Endothelial cell of umbilical vein (primary cell): ENCODE measurements at regions of chr1 and their contacts with region 1.

Region 1: GRCh38 chr1:209850342-209850979 is 22.7 kb downstream of the UTP25 start:
- DNase-seq: peak; percentile 59
- H3K4me3 ChIP-seq: no peak overlapping the region
- H3K27ac ChIP-seq: no peak overlapping the region
- H3K4me1 ChIP-seq: no peaks in the 10 kb centered on the region
- H3K27me3 ChIP-seq: no peaks in the 10 kb centered on the region
- CTCF ChIP-seq: peak; percentile 70 to 76
- POLR2A ChIP-seq: no peak

Region 2: DNA sequence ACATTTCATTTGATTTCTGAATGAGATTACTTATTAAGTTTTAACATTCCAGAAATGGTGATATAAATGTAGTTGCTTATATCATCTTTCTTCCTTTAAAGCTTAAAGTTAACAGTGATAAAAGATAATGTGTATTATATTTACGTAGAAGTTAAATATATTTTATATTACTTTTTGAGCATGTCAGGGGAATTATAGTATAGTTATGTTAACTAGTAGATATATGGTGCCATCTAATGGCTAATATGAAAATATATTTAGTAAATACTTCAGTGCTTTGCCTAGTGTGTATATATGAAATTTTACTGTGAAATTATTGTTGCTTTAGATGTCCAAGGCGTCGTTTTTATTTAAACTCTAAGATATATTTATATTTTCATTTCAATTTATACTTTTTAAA is 139.1 kb after region 1 on chr1:
- CTCF ChIA-PET with region 1: interaction called, 14 read pairs
- POLR2A ChIA-PET with region 1: no interaction called
- dilution Hi-C with region 1: no loop called
- intact Hi-C with region 1: no loop called
- DNase-seq: peak; percentile 31
- H3K4me3 ChIP-seq: no peak overlapping the region
- H3K27ac ChIP-seq: no peak overlapping the region
- H3K4me1 ChIP-seq: no peaks in the 10 kb centered on the region
- H3K27me3 ChIP-seq: peaks cover 3 to 14% of the 10 kb centered on the region in 2 experiments
- CTCF ChIP-seq: no peak
- POLR2A ChIP-seq: no peak